Common myeloid progenitor, CD34-positive (primary cell): ENCODE measurements at regions of chr5 and their contacts with region 1.

Region 1: DNA sequence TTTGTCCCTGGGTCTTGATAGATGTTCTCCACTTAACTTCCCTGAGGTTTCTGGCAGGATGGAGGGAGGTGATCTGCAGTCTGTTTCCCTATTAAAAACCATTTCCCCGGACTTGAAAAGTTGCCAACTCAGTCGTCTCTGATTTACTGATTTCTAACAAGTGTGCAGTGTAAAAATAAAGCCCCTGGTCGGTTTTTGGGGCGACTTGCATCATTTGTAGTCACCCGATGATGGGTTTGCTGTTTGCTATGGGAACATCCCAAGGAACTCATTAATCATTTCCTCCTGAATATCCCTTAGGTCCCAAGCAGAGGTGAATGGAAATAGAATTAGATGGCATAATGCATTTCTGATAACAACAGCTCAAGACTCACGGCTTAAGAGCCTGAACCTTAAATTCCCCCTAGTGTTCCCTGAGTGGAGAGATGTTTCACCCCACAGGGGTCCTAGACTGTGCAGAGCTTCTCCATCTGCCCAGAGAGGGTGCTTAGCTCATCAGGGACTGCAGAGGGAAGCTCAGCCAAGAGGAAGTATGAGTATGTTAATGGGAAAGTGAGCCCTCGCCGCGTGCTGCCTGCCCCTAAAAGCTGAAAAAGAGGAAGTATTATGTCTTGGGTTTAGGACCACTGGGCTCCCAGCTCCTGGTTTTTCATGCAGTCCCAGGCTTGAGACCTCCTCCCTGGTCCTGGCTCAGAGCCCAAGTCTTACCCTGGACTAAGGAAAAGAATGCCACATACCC is 115.1 kb upstream of the DAP start:
- DNase-seq: peak; percentile 34 to 80 (median 74)
- H3K4me3 ChIP-seq: no peak overlapping the region
- H3K27ac ChIP-seq: no peak overlapping the region
- H3K4me1 ChIP-seq: peaks cover 0 to 11% (median 7%) of the 10 kb centered on the region in 4 experiments
- H3K27me3 ChIP-seq: peaks cover 0 to 4% (median 0%) of the 10 kb centered on the region in 5 experiments

Region 2: GRCh38 chr5:10856683-10857337 is 19.4 kb before region 1 on chr5:
- CTCF ChIA-PET with region 1: interaction called, 15 read pairs
- POLR2A ChIA-PET with region 1: no interaction called
- DNase-seq: peak; percentile 33 to 66 (median 59)
- H3K4me3 ChIP-seq: peak overlapping the region in 2 of 7 experiments; percentile 19 to 52
- H3K27ac ChIP-seq: no peak overlapping the region
- H3K4me1 ChIP-seq: peaks cover 0 to 46% (median 39%) of the 10 kb centered on the region in 4 experiments
- H3K27me3 ChIP-seq: no peaks in the 10 kb centered on the region

Region 3: GRCh38 chr5:10863763-10864383 is 12.3 kb before region 1 on chr5:
- CTCF ChIA-PET with region 1: interaction called, 10 read pairs
- POLR2A ChIA-PET with region 1: no interaction called
- DNase-seq: peak; percentile 63 to 79 (median 71)
- H3K4me3 ChIP-seq: no peak overlapping the region
- H3K27ac ChIP-seq: no peak overlapping the region
- H3K4me1 ChIP-seq: no peaks in the 10 kb centered on the region
- H3K27me3 ChIP-seq: no peaks in the 10 kb centered on the region